ENCODE measurements at regions of chr3 and their contacts with region 1.

Region 1: GRCh38 chr3:24237971-24238767 is 256.5 kb downstream of the THRB start:
- DNase-seq: peak; percentile 89
- H3K4me3 ChIP-seq: no peak overlapping the region
- H3K27ac ChIP-seq: peak overlapping the region; percentile 38
- H3K4me1 ChIP-seq: peaks cover 45% of the 10 kb centered on the region
- H3K27me3 ChIP-seq: no peaks in the 10 kb centered on the region
- CTCF ChIP-seq: peak; percentile 62 to 77

Region 2: DNA sequence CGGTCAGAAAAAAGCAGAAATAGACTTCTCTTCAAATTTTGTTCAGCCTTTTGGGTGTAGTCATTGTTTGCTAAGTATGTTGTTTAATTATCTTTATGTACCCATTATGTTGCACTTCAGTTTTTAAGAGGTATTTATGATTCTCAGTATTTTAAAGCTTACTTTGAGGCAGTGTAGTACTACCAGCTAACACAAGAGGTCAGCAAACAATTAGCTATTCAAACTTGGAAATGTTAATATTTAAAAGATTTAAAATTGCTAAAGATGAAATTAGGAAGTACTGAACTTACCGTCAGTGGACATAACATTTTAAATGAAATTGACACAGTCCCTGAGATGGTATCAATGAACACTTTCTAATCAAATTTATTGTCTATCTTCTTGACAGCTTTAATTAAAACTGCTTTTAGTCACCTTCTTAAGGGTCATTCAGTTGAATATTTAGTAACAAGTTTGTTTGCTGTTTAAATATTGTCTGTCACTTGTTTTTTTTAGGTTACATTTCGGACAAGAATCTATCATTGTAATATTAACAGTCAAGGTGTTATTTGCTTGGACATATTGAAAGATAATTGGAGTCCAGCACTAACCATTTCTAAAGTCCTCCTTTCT is 349.4 kb before region 1 on chr3:
- CTCF ChIA-PET with region 1: no interaction called
- dilution Hi-C with region 1: no loop called
- in situ Hi-C with region 1: no loop called
- intact Hi-C with region 1: loop called (anchors 1 kb)
- DNase-seq: no peak
- H3K4me3 ChIP-seq: no peak overlapping the region
- H3K27ac ChIP-seq: no peak overlapping the region
- H3K4me1 ChIP-seq: no peaks in the 10 kb centered on the region
- H3K27me3 ChIP-seq: no peaks in the 10 kb centered on the region
- CTCF ChIP-seq: peak; percentile 70 to 83

Region 3: DNA sequence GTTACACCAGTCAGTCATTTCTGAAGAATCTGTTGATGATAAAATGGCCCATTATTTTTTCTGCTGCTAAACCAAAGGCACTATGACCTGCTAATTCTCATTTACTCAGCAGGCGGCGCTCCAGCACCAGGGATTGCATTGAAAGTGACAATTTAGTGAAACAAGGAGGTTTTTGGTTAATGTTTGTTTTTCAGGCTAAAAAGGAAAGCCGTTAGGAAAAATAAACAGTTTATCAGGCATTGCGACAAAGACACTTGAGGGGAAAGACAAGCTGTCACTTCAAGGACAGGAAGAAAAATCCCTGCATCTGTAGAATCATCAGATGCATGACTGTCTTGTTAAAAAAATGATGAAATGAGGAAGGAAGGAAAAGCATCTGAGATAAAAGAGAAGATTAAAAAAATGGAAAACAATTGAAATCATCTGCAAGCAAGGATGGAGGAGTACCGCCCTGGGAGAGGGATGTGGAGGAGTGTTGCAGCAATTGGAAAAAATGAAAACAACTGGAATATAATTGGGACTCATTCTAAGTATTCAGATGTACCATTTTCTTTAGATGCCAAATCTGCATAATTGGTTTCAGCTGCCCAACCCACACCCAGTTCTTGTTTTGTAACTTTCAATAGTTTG is 239.0 kb before region 1 on chr3:
- CTCF ChIA-PET with region 1: no interaction called
- dilution Hi-C with region 1: no loop called
- in situ Hi-C with region 1: loop called (anchors 25 kb)
- intact Hi-C with region 1: loop called (anchors 1 kb)
- DNase-seq: peak; percentile 33
- H3K4me3 ChIP-seq: no peak overlapping the region
- H3K27ac ChIP-seq: no peak overlapping the region
- H3K4me1 ChIP-seq: peaks cover under 1% of the 10 kb centered on the region
- H3K27me3 ChIP-seq: no peaks in the 10 kb centered on the region
- CTCF ChIP-seq: peak; percentile 96 to 100

Region 4: GRCh38 chr3:24004171-24004938 is 233.8 kb before region 1 on chr3:
- CTCF ChIA-PET with region 1: no interaction called
- dilution Hi-C with region 1: no loop called
- in situ Hi-C with region 1: loop called (anchors 25 kb)
- intact Hi-C with region 1: loop called (anchors 1 kb)
- DNase-seq: peak; percentile 58
- H3K4me3 ChIP-seq: no peak overlapping the region
- H3K27ac ChIP-seq: no peak overlapping the region
- H3K4me1 ChIP-seq: peaks cover 3% of the 10 kb centered on the region
- H3K27me3 ChIP-seq: no peaks in the 10 kb centered on the region
- CTCF ChIP-seq: no peak

Region 5: DNA sequence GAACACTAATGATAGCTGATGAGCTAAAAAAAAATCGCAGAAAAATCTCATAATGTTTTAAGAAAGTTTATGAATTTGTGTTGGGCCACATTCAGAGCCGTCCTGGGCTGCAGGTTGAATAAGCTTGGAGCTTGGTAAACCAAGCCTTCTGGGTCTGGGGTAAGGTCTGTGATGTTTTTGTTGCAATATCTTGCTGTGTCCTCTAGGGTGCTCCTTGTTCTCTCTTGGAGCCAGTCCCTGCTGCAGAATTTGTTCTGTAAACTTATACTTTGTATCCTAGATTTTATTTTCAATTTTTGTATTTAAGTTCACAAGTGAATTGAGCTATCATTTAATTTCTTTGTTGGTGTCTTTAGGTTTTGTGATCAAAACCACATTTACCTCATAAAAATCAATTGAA is 149.4 kb before region 1 on chr3:
- CTCF ChIA-PET with region 1: no interaction called
- dilution Hi-C with region 1: no loop called
- in situ Hi-C with region 1: no loop called
- intact Hi-C with region 1: loop called (anchors 5 kb)
- DNase-seq: peak; percentile 20
- H3K4me3 ChIP-seq: no peak overlapping the region
- H3K27ac ChIP-seq: no peak overlapping the region
- H3K4me1 ChIP-seq: no peaks in the 10 kb centered on the region
- H3K27me3 ChIP-seq: no peaks in the 10 kb centered on the region
- CTCF ChIP-seq: peak; percentile 70 to 74

Region 6: GRCh38 chr3:24185738-24186384 is 52.3 kb before region 1 on chr3:
- CTCF ChIA-PET with region 1: no interaction called
- dilution Hi-C with region 1: no loop called
- in situ Hi-C with region 1: no loop called
- intact Hi-C with region 1: loop called (anchors 1 kb)
- DNase-seq: peak; percentile 58
- H3K4me3 ChIP-seq: no peak overlapping the region
- H3K27ac ChIP-seq: no peak overlapping the region
- H3K4me1 ChIP-seq: no peaks in the 10 kb centered on the region
- H3K27me3 ChIP-seq: no peaks in the 10 kb centered on the region
- CTCF ChIP-seq: peak; percentile 64 to 66

Measured in mammary epithelial cell (primary cell).